ENCODE measurements at regions of chr9 and their contacts with region 1.

Region 1: GRCh38 chr9:95595721-95596295 is 79.0 kb upstream of the PTCH1 start:
- DNase-seq: no peak
- H3K4me3 ChIP-seq: no peak overlapping the region
- H3K27ac ChIP-seq: no peak overlapping the region
- H3K4me1 ChIP-seq: no peaks in the 10 kb centered on the region
- H3K27me3 ChIP-seq: no peaks in the 10 kb centered on the region
- CTCF ChIP-seq: no peak
- POLR2A ChIP-seq: no peak

Region 2: GRCh38 chr9:94681508-94681907 is 914.3 kb before region 1 on chr9:
- intact Hi-C with region 1: loop called (anchors 5 kb)
- DNase-seq: peak in 1 of 2 donors; percentile 40
- H3K4me3 ChIP-seq: no peak overlapping the region
- H3K27ac ChIP-seq: no peak overlapping the region
- H3K4me1 ChIP-seq: no peaks in the 10 kb centered on the region
- H3K27me3 ChIP-seq: no peaks in the 10 kb centered on the region
- CTCF ChIP-seq: peak in 2 of 3 donors; percentile 22 to 73
- POLR2A ChIP-seq: no peak